Mammary epithelial cell (primary cell): ENCODE measurements at regions of chr22 and their contacts with region 1.

Region 1: GRCh38 chr22:31211862-31212730 is at the start of gene LIMK2:
- DNase-seq: peak; percentile 88
- H3K4me3 ChIP-seq: peak within 1 kb of the TSS; percentile 70 to 96 (median 92)
- H3K27ac ChIP-seq: peak within 1 kb of the TSS; percentile 61
- H3K4me1 ChIP-seq: peaks cover 14% of the 10 kb centered on the region
- H3K27me3 ChIP-seq: no peaks in the 10 kb centered on the region
- CTCF ChIP-seq: peak; percentile 57 to 83
- total RNA-seq, gene LIMK2: 176 to 484 TPM

Region 2: DNA sequence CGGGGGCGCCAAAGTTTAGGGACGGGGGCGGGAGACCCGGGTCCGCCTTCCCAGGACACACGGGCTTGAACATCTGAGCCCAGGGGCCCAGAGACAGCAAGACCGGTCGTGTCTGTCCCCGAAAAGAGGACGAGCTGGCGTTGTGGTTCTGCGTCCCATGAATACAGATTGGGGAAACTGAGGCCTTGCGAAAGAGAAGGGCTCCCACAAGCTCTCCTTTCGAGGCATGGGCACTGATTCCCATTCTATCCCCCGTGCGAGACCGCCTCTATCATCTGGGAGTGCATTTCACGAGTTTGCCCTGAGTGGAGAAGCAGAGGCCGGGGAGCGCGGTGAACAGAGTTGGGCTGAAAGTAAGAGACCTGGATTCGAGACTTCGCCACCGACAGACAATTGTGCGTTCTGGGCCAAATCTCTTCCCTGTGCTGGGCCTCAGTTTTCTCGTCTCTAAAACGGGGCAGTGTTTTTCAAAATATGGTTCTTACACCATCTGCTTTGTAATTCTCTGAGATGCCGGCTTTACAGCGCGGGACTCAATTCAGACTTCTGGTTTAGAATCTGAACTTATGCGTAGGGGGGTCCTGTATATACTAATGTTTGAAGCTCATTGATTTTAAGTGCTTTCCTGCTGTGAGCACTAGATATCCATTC is 51.6 kb before region 1 on chr22:
- CTCF ChIA-PET with region 1: no interaction called
- dilution Hi-C with region 1: no loop called
- in situ Hi-C with region 1: no loop called
- intact Hi-C with region 1: loop called (anchors 1 kb)
- DNase-seq: no peak
- H3K4me3 ChIP-seq: peak overlapping the region; percentile 72 to 95 (median 89)
- H3K27ac ChIP-seq: peak overlapping the region; percentile 79
- H3K4me1 ChIP-seq: peaks cover 21% of the 10 kb centered on the region
- H3K27me3 ChIP-seq: no peaks in the 10 kb centered on the region
- CTCF ChIP-seq: no peak

Region 3: DNA sequence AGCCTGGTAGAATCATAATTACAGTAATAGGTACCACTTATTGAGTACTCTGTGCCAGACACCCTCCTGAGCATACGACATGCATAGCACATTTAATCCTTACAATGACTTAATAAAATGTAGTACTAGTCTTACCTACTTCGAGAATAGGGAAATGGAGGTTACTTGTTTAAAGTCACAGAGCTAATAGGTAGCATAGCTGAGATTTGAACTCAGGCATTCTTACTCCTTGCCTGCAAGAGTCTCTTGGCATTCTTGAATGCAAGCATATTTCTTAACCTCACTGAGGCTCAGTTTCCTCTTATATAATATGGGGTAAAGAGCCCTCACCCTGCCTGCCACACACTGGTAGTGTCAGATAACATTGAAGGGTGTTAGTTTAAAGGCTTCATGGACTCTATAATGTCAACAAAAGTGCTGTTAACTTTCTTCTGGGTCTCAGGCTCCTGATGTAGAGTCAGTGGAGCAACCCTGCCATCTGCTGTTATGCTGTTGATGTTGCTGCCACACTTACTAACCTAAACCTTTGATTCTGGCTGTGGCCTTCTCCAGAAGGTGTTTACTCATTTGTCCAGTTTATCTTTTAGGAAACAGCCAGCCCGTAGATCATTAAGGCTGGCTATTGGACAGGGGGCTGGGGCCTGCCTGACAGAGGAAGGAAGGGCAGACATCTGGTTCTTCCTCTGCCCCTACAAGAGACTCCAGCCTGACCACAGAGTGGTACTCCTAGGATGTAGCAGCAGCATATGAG is 18.9 kb after region 1 on chr22:
- CTCF ChIA-PET with region 1: no interaction called
- dilution Hi-C with region 1: no loop called
- in situ Hi-C with region 1: no loop called
- intact Hi-C with region 1: loop called (anchors 2 kb)
- DNase-seq: peak; percentile 16
- H3K4me3 ChIP-seq: no peak overlapping the region
- H3K27ac ChIP-seq: no peak overlapping the region
- H3K4me1 ChIP-seq: peaks cover 3% of the 10 kb centered on the region
- H3K27me3 ChIP-seq: no peaks in the 10 kb centered on the region
- CTCF ChIP-seq: peak; percentile 43 to 77

Region 4: DNA sequence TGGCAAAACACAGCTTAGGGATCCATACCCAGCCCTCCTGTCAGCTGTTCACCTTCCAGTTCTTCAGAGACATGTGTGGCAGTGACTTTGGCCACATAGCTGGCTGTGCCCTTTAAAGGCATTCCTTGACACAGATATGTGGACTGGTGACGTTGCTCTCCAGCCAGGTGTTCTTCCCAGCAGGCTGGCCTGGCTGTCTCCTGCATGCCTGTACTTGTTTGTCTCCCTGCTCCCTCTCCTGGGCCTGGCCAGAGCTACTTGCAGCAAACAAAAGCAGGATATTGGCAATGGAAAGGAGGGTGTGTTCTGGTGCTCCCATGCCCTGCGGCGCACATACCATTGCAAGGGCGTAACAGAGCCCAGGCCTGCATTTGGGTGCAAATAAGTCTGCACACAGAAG is 41.9 kb after region 1 on chr22:
- CTCF ChIA-PET with region 1: no interaction called
- dilution Hi-C with region 1: no loop called
- in situ Hi-C with region 1: no loop called
- intact Hi-C with region 1: loop called (anchors 1 kb)
- DNase-seq: peak; percentile 98
- H3K4me3 ChIP-seq: peak overlapping the region in 1 of 3 experiments; percentile 15
- H3K27ac ChIP-seq: peak overlapping the region; percentile 74
- H3K4me1 ChIP-seq: peaks cover 53% of the 10 kb centered on the region
- H3K27me3 ChIP-seq: no peaks in the 10 kb centered on the region
- CTCF ChIP-seq: peak in 1 of 2 donors; percentile 49

Region 5: DNA sequence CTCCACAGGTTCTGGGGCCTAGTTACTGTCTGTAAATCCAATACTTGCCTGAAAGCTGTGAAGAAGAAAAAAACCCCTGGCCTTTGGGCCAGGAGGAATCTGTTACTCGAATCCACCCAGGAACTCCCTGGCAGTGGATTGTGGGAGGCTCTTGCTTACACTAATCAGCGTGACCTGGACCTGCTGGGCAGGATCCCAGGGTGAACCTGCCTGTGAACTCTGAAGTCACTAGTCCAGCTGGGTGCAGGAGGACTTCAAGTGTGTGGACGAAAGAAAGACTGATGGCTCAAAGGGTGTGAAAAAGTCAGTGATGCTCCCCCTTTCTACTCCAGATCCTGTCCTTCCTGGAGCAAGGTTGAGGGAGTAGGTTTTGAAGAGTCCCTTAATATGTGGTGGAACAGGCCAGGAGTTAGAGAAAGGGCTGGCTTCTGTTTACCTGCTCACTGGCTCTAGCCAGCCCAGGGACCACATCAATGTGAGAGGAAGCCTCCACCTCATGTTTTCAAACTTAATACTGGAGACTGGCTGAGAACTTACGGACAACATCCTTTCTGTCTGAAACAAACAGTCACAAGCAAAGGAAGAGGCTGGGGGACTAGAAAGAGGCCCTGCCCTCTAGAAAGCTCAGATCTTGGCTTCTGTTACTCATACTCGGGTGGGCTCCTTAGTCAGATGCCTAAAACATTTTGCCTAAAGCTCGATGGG is 66.7 kb after region 1 on chr22:
- CTCF ChIA-PET with region 1: no interaction called
- dilution Hi-C with region 1: loop called (anchors 5 kb)
- in situ Hi-C with region 1: no loop called
- intact Hi-C with region 1: no loop called
- DNase-seq: no peak
- H3K4me3 ChIP-seq: no peak overlapping the region
- H3K27ac ChIP-seq: no peak overlapping the region
- H3K4me1 ChIP-seq: no peaks in the 10 kb centered on the region
- H3K27me3 ChIP-seq: no peaks in the 10 kb centered on the region
- CTCF ChIP-seq: no peak

Region 6: GRCh38 chr22:31509061-31509762 is 297.1 kb after region 1 on chr22:
- CTCF ChIA-PET with region 1: no interaction called
- dilution Hi-C with region 1: loop called (anchors 10 kb)
- in situ Hi-C with region 1: no loop called
- intact Hi-C with region 1: no loop called
- DNase-seq: no peak
- H3K4me3 ChIP-seq: no peak overlapping the region
- H3K27ac ChIP-seq: no peak overlapping the region
- H3K4me1 ChIP-seq: no peaks in the 10 kb centered on the region
- H3K27me3 ChIP-seq: no peaks in the 10 kb centered on the region
- CTCF ChIP-seq: no peak